ENCODE measurements at regions of chr14 and their contacts with region 1.

Region 1: GRCh38 chr14:91060351-91061055 is at the start of gene RPS6KA5:
- DNase-seq: peak; percentile 100
- ATAC-seq: peak; percentile 98
- total RNA-seq, gene RPS6KA5: 10.6 TPM

Region 2: DNA sequence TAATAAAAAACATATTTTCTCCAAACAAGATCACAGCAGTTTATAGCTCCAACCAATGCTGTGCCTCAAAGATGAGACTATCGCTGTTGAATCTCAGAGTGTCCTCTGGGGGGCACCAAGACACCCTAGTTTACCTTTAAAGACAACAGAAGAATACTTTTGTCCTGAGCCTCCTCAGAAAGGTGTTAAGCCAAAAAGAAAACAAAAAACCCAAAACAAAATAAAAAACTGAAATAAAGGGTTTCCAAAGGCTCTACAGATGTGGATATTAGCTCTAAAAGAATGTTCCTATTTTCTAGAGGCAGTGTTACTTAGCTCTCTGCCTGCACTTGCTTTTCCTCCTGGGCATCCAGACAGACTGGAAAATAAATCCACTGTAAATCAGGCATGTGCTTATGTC is 157.4 kb before region 1 on chr14:
- intact Hi-C with region 1: loop called (anchors 5 kb)
- DNase-seq: no peak
- ATAC-seq: peak; percentile 84

Region 3: DNA sequence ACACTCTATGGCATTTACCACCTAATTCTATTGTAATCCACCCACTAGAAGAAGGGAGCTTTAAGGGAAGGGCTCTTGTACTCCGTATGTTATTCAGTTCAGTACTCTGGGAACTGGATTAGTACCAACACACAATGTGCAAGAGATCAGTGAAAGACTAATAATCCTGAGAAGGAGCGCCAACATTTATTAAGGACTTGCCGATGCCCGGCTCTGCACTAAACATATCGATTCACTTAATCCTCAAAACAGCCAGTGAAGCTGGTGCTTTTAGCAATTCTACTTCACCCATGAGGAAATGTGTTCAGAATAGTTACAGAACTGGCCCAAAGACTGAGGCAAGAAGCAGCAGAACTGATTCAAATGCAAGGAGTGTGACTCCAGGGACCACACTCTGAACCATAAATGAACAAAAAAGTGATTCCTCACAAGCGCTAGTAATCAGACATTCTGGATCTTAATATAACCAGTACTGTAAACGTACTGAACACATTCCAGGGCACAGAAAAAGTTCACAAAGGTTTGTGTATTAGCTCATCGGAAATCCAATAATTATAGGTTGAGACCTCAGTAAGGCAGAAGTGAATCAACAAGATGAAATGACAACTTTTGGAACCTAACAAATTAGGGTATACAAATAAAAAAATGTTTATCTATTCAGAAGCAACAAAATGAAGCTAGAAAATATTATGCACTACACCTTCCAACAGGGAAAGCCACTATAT is 80.8 kb before region 1 on chr14:
- intact Hi-C with region 1: no loop called
- DNase-seq: no peak
- ATAC-seq: no peak

Region 4: GRCh38 chr14:91114079-91115065 is 53.9 kb after region 1 on chr14:
- intact Hi-C with region 1: loop called (anchors 2 kb)
- DNase-seq: peak; percentile 50
- ATAC-seq: peak; percentile 79